Astrocyte of the cerebellum (primary cell): ENCODE measurements at regions of chr13 and their contacts with region 1.

Region 1: GRCh38 chr13:105363261-105364190 is 1171.9 kb downstream of the EFNB2 start:
- DNase-seq: no peak
- H3K4me3 ChIP-seq: no peak overlapping the region
- CTCF ChIP-seq: no peak

Region 2: GRCh38 chr13:105389373-105389772 is 25.8 kb after region 1 on chr13:
- in situ Hi-C with region 1: loop called (anchors 5 kb)
- DNase-seq: no peak
- H3K4me3 ChIP-seq: no peak overlapping the region
- CTCF ChIP-seq: no peak

Region 3: GRCh38 chr13:105406551-105406950 is 43.0 kb after region 1 on chr13:
- in situ Hi-C with region 1: no loop called
- DNase-seq: no peak
- H3K4me3 ChIP-seq: no peak overlapping the region
- CTCF ChIP-seq: no peak

Region 4: DNA sequence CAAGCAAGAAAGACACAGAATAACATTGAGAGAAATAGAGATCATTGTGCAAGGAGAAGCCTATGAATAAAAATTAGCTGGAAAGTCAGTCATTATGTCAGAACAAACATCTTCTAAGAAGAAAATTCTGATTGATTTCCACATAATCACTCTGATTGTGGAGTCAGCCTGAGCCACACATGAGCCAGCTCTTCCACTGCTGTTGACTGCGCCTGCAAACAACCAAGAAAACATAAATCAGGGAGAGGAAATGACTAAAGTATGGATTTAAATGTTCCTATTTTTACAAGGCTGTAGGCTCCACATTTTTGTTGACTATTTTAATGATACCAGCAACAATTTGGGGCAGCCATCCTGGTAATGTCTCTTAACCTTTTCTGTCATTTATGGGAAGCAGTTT is 209.6 kb after region 1 on chr13:
- in situ Hi-C with region 1: no loop called
- DNase-seq: no peak
- H3K4me3 ChIP-seq: no peak overlapping the region
- CTCF ChIP-seq: no peak